Activated CD4-positive, alpha-beta T cell treated with anti-CD3 and anti-CD28 coated beads for 36 hours (primary cell): ENCODE measurements at regions of chr7 and their contacts with region 1.

Region 1: GRCh38 chr7:20778063-20778721 is 8.5 kb downstream of the SP8 start:
- DNase-seq: peak; percentile 61
- ATAC-seq: peak; percentile 68
- H3K4me3 Mint-ChIP-seq: no peak overlapping the region
- H3K27ac Mint-ChIP-seq: no peak overlapping the region
- H3K4me1 Mint-ChIP-seq: peaks cover 19% of the 10 kb centered on the region
- H3K27me3 Mint-ChIP-seq: peaks cover 68% of the 10 kb centered on the region

Region 2: DNA sequence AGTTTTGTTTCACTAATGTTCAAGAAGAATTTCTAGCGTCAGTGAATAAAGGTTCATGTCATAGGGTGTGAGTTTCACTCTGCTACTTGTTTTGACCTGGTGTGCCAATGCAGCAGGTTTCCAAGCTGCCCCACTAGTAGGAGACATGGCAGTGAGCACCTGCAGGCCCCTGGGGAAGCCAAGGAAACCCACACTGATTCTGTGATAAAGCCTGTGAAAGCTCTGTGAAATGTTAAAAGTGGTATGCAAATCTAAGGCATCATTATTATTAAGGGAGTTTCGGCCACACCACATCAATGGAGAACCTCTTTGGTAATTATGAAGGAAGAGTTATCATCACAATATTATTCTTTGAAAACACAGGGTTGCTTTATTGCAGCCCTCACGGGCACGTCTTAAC is 116.3 kb before region 1 on chr7:
- CTCF ChIA-PET with region 1: no interaction called
- POLR2A ChIA-PET with region 1: no interaction called
- intact Hi-C with region 1: no loop called
- DNase-seq: no peak
- ATAC-seq: no peak
- H3K4me3 Mint-ChIP-seq: no peak overlapping the region
- H3K27ac Mint-ChIP-seq: no peak overlapping the region
- H3K4me1 Mint-ChIP-seq: no peaks in the 10 kb centered on the region
- H3K27me3 Mint-ChIP-seq: no peaks in the 10 kb centered on the region

Region 3: GRCh38 chr7:20744948-20745587 is 33.1 kb before region 1 on chr7:
- CTCF ChIA-PET with region 1: no interaction called
- POLR2A ChIA-PET with region 1: no interaction called
- intact Hi-C with region 1: no loop called
- DNase-seq: no peak
- ATAC-seq: no peak
- H3K4me3 Mint-ChIP-seq: no peak overlapping the region
- H3K27ac Mint-ChIP-seq: no peak overlapping the region
- H3K4me1 Mint-ChIP-seq: no peaks in the 10 kb centered on the region
- H3K27me3 Mint-ChIP-seq: peaks cover 8% of the 10 kb centered on the region

Region 4: DNA sequence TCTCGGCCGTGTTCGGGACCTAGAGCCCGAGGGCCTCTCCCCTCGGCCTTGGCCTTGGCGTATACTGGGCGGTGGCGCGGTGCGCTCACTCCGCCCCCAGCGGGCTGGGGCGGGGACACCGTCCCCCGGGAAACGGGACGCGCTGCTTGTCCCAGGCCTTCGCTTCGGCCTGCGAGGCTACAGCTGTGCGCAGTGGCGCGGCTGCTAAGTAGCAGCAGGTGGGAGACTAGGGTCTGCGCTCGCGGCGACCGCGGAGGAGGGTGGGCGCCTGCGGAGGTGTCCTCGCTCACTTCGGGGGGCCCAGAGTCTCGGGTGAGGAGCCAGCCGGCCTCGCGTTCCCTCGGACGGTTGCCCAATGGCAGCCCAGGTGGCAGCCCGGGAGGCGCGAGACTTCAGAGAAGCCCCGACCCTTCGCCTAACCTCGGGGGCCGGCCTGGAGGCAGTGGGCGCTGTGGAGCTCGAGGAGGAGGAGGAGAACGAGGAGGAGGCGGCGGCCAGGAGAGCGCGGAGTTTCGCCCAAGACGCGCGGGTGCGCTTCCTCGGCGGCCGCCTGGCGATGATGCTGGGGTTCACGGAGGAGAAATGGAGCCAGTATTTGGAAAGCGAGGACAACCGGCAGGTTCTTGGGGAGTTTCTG is 764.8 kb after region 1 on chr7 and contains the start of gene DNAH11:
- CTCF ChIA-PET with region 1: no interaction called
- POLR2A ChIA-PET with region 1: no interaction called
- intact Hi-C with region 1: loop called in 1 of 2 experiments (anchors 5 kb)
- DNase-seq: peak; percentile 61
- ATAC-seq: peak; percentile 94
- H3K4me3 Mint-ChIP-seq: peak within 1 kb of the TSS; percentile 76
- H3K27ac Mint-ChIP-seq: peak within 1 kb of the TSS; percentile 39
- H3K4me1 Mint-ChIP-seq: peaks cover 6% of the 10 kb centered on the region
- H3K27me3 Mint-ChIP-seq: peaks cover 50% of the 10 kb centered on the region
- total RNA-seq, gene DNAH11: 4.2 to 4.3 TPM

Region 5: GRCh38 chr7:21767300-21767900 is 989.2 kb after region 1 on chr7:
- CTCF ChIA-PET with region 1: interaction called, 3 read pairs
- POLR2A ChIA-PET with region 1: no interaction called
- intact Hi-C with region 1: loop called in 1 of 2 experiments (anchors 5 kb)
- DNase-seq: peak; percentile 49
- ATAC-seq: peak; percentile 84
- H3K4me3 Mint-ChIP-seq: no peak overlapping the region
- H3K27ac Mint-ChIP-seq: no peak overlapping the region
- H3K4me1 Mint-ChIP-seq: peaks cover 14% of the 10 kb centered on the region
- H3K27me3 Mint-ChIP-seq: no peaks in the 10 kb centered on the region

Region 6: DNA sequence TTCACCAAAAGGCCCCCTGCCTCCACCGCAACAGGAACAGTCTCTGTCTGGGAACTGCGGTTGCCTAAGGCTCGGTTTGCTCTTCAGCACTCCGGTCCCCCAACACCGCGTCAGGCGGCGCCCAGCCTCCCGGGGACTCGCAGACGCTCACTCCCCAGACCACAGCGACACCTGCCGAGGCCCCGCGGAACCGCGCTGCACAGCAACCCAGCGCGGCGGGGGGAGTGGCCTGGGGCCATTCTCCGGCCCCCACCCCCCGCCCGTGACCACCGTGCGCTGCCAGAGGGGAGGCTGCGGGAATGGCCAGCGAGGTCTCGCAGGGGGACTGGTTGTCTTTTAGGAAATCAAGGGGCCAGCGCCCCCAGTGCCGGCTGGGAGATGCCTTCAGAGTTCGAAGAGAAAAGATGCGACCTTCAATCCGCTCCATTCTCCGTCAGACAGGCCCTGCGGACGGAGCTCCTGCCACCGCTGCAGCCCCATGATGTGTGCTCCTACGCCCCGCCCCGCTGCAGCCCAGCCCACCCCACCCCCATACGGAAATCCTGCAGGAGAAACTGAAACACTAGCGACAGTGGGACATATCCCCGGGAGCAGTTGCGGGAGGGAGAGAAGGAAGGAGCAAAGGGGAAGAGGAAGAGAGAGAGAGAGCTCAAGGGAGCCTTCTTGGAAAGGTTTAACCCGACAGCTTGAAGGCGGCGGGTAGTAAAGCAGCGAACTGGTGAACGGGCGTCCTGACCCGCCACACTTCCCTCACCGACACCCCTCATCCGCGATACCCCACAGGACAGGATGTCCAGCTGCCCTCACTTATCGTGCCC is 1304.9 kb after region 1 on chr7:
- CTCF ChIA-PET with region 1: no interaction called
- POLR2A ChIA-PET with region 1: no interaction called
- intact Hi-C with region 1: loop called in 1 of 2 experiments (anchors 5 kb)
- DNase-seq: peak; percentile 91
- ATAC-seq: peak; percentile 99
- H3K4me3 Mint-ChIP-seq: peak overlapping the region; percentile 71
- H3K27ac Mint-ChIP-seq: no peak overlapping the region
- H3K4me1 Mint-ChIP-seq: peaks cover 10% of the 10 kb centered on the region
- H3K27me3 Mint-ChIP-seq: peaks cover 11% of the 10 kb centered on the region